ENCODE measurements at regions of chr2 and their contacts with region 1.

Region 1: DNA sequence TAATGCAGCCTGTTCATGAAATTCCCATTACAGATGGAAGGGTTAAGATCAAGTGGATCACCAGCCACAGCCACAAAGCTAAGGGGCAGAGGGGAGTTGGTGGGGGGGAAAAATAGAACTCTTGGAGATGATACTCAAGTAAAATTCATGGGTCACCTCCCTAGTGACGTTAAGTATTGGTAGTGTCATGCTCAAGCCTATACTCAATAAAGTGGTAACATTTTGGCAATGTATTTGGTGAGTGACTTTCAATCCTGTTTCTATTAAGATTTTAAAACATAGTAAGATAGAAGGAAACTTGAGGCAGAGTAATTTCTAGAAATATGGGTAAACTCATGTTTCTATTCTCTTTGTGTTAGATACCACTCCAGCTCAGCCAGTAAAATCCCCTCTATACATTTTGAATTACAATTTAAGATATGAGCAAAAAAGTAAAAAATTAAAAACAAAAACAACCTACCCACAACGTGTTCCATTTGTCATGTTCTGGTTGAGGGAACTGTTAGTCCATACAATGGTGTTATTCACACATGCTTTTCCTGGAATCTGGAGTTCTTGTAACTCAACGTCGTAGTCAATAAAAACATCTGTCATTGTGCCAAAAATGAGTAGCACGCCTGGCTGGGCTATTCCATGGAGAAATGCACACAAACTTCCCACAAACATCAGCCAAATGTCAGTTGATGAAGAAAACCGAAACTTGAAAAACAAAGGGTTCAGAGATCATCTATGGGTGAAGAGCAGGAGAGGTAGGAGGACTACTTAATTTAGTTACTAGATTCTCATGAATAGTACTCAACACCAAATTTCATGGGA is 18.1 kb downstream of the ABCB11 start:
- DNase-seq: no peak
- H3K4me3 ChIP-seq: no peak overlapping the region
- H3K27ac ChIP-seq: no peak overlapping the region
- H3K4me1 ChIP-seq: peaks cover 34% of the 10 kb centered on the region
- H3K27me3 ChIP-seq: no peaks in the 10 kb centered on the region
- CTCF ChIP-seq: no peak

Region 2: GRCh38 chr2:169047256-169048250 is 34.5 kb after region 1 on chr2:
- CTCF ChIA-PET with region 1: no interaction called
- dilution Hi-C with region 1: loop called (anchors 5 kb)
- in situ Hi-C with region 1: no loop called
- intact Hi-C with region 1: no loop called
- DNase-seq: peak; percentile 51
- H3K4me3 ChIP-seq: no peak overlapping the region
- H3K27ac ChIP-seq: peak overlapping the region; percentile 21
- H3K4me1 ChIP-seq: peaks cover 26% of the 10 kb centered on the region
- H3K27me3 ChIP-seq: no peaks in the 10 kb centered on the region
- CTCF ChIP-seq: no peak

Measured in mammary epithelial cell (primary cell).